GM18951 (cell line): ENCODE measurements at regions of chr4 and their contacts with region 1.

Region 1: GRCh38 chr4:109424093-109424841 is 9.3 kb upstream of the SEC24B start:
- POLR2A ChIP-seq: no peak

Region 2: GRCh38 chr4:109803924-109804571 is 379.8 kb after region 1 on chr4:
- in situ Hi-C with region 1: loop called (anchors 10 kb)
- POLR2A ChIP-seq: no peak